A673 (cell line): ENCODE measurements at regions of chr11 and their contacts with region 1.

Region 1: DNA sequence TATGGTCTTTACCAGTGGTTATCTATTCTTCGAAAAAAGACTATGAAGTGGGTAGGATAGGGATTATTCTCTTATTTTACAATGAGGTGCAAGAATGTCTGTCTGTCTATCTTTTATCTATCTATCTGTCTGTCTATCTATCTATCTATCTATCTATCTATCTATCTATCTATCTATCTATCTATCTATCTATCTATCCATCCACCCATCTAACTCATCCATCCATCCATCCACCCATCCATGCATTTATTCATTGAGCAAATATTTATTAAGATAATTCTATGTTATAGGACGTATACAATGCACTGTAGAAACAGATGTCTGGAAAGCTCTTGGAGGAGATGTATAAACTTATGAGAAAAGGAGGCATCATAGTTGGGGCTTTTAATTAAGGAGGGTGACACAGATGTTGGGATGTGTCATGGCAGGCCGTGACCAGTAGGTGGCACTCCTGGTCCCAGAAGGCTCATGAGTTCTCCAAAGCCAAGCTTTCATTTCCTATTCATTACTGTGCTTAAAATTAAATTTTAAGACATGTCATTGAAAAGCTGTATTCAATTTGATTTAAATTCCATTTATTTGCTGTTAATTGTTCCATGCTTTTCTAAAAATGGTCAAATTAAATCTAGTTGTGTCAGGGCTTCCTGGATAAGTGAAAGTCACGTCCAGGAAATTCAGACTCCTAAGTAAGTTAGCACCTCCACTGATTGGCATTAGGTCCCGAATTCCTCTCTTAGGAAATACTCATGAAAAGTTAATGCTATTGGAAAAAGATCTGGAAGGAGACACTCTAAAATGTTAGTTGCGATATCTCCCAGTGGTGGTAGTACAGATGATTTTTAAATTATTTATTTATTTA is 19.0 kb upstream of the E2F8 start:
- DNase-seq: peak; percentile 60
- H3K4me3 ChIP-seq: no peak overlapping the region
- H3K27ac ChIP-seq: no peak overlapping the region
- H3K4me1 ChIP-seq: no peaks in the 10 kb centered on the region
- H3K27me3 ChIP-seq: no peaks in the 10 kb centered on the region
- CTCF ChIP-seq: peak; percentile 82

Region 2: DNA sequence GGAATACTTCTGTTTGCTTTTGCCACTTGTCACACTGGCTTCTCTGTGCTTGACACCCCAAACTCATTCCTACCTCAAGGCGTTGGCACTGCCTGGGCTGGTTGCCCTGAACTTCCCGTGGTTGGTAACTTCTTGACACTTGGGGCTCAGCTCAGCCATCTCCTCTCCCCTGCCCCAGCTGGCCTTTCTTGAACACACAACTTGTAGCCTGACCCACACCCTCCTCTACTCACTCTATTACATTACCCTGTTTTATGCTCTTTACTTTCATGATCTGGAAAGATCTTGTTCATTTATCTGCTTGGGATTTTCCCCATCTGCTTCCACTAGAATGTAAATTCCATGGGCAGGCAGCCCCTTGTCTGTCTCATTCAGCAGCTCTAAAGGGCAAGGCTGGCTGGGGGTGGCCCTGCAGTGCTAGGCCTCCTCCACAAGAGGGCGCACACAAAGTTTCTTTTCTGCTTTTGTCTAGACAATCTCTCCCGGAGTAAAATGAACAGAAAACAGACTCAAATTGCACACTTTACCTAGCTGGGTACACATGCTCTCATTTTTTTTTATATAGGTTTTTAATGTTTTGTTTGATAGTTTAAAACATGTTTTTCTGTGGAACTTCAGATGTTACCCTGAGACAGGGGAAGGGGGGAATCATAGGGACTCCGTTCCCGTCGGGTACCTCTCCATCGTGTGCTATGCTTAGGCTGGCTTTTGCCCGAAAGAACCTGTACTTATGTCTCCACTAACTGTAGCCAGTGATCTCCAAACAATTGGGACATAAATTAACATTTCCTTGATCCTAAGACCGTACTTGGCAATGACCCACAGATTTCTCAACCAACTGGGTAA is 182.7 kb before region 1 on chr11:
- CTCF ChIA-PET with region 1: no interaction called
- POLR2A ChIA-PET with region 1: no interaction called
- intact Hi-C with region 1: loop called (anchors 5 kb)
- DNase-seq: peak; percentile 47
- H3K4me3 ChIP-seq: no peak overlapping the region
- H3K27ac ChIP-seq: no peak overlapping the region
- H3K4me1 ChIP-seq: no peaks in the 10 kb centered on the region
- H3K27me3 ChIP-seq: no peaks in the 10 kb centered on the region
- CTCF ChIP-seq: peak; percentile 92

Region 3: GRCh38 chr11:19134004-19134403 is 125.7 kb before region 1 on chr11:
- CTCF ChIA-PET with region 1: no interaction called
- POLR2A ChIA-PET with region 1: no interaction called
- intact Hi-C with region 1: no loop called
- DNase-seq: no peak
- H3K4me3 ChIP-seq: no peak overlapping the region
- H3K27ac ChIP-seq: no peak overlapping the region
- H3K4me1 ChIP-seq: no peaks in the 10 kb centered on the region
- H3K27me3 ChIP-seq: no peaks in the 10 kb centered on the region
- CTCF ChIP-seq: no peak

Region 4: DNA sequence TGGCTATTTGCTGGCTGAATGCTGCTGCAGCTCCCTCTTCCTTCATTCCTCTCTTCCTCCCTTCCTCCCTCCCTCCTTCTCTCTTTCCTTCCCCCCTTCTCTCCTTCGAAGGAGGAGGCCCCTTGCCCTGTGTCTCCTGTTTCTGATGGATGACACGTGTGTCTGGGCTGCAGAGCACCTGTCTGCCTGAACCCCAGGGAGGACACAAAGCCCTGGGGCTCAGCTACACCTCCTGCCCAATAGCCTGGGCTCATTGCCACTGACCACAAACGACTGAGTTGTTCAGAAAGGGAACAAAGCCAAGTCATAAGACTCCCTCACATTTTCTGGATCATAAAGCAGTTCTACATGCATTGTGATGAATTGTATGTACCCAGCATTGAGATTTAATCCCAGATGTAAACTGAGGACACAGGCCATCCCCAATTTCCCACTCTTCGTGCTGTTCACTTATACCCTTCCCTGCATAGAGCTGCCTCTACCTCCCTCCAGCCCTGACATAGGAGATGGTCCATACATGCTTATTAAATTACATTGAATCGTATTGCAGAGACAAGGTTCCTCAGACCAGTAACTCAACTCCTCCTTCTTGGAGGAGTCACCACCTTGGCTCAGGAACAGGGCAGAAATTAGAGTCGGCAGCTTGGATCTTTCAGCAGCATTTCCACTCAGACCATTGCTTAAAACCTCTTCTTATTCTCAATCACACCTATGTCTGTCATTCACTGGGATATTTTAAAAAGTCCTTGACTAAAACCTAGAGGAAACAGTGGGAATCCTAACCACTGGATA is 59.1 kb before region 1 on chr11:
- CTCF ChIA-PET with region 1: no interaction called
- POLR2A ChIA-PET with region 1: no interaction called
- intact Hi-C with region 1: no loop called
- DNase-seq: no peak
- H3K4me3 ChIP-seq: no peak overlapping the region
- H3K27ac ChIP-seq: no peak overlapping the region
- H3K4me1 ChIP-seq: no peaks in the 10 kb centered on the region
- H3K27me3 ChIP-seq: peaks cover 10% of the 10 kb centered on the region
- CTCF ChIP-seq: no peak

Region 5: DNA sequence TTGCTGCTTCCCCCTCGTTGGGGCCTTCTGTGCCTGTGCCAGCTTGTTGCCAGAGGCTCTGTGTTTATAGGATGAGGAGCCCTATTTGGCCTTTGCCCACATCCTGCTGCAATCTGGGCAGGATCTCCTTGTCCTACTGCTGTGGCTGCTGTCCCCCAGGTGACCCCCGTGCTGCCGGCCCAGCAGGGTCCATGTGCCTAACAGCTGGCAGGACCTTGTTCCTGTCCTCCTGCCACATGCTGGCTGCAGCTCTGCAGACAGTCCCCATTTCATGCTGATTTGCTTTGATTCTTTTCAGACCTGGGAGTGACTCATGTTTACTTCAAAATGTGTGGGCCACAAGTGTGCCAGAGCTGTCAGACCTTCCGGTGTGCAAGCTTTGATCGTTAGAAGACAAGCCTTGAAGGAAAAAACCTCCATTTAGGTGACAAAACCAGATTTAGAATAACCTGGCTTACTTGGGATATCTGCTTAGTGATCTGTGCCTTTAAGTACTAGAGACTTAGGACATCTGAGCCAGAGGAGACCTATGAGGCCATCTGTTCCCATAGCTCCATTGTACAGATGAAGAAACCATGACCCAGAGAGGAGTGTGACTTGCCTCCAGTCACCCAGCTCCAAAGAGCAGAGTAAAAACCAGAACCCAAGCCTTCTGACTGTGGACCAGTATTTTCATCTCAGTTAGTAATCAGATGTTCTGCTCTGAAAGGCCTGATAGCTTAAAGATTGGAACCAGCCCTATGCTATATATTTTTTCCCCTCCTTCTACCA is 464.0 kb after region 1 on chr11:
- CTCF ChIA-PET with region 1: no interaction called
- POLR2A ChIA-PET with region 1: no interaction called
- intact Hi-C with region 1: no loop called
- DNase-seq: no peak
- H3K4me3 ChIP-seq: no peak overlapping the region
- H3K27ac ChIP-seq: no peak overlapping the region
- H3K4me1 ChIP-seq: no peaks in the 10 kb centered on the region
- H3K27me3 ChIP-seq: no peaks in the 10 kb centered on the region
- CTCF ChIP-seq: no peak